PC-9 (cell line): ENCODE measurements at regions of chr5 and their contacts with region 1.

Region 1: GRCh38 chr5:179697993-179698934 is 503 bp upstream of the CANX start:
- DNase-seq: peak; percentile 96 to 100
- H3K4me3 ChIP-seq: peak overlapping the region; percentile 89
- H3K27ac ChIP-seq: peak overlapping the region; percentile 91
- H3K4me1 ChIP-seq: peaks cover 25% of the 10 kb centered on the region
- H3K27me3 ChIP-seq: no peaks in the 10 kb centered on the region
- CTCF ChIP-seq: no peak

Region 2: DNA sequence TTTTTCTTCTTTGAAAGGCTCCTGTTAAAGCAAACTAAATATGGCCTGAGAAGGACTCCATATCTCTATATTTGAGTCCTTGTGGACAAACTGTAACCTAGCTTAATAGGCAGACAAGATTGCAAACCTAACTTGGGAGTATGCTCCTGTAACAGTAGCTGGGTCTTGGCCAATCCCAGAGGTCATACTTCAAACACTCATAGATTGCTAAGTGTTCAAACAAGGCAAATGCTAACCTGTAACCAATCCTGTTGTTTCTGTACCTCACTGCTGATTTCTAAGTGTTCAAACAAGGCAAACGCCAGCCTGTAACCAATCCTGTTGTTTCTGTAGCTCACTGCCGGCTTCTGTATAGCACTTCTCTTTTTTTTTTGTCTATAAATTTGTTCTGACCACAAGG is 1020.8 kb before region 1 on chr5:
- CTCF ChIA-PET with region 1: interaction called, 25 read pairs
- POLR2A ChIA-PET with region 1: no interaction called
- intact Hi-C with region 1: no loop called
- DNase-seq: no peak
- H3K4me3 ChIP-seq: no peak overlapping the region
- H3K27ac ChIP-seq: no peak overlapping the region
- H3K4me1 ChIP-seq: no peaks in the 10 kb centered on the region
- H3K27me3 ChIP-seq: peaks cover 7% of the 10 kb centered on the region; the same call in 1 of the 2 replicates
- CTCF ChIP-seq: no peak

Region 3: GRCh38 chr5:179550511-179551230 is 147.6 kb before region 1 on chr5 and contains the start of gene RUFY1:
- CTCF ChIA-PET with region 1: no interaction called
- POLR2A ChIA-PET with region 1: no interaction called
- intact Hi-C with region 1: loop called (anchors 1 kb)
- DNase-seq: peak; percentile 58 to 91
- H3K4me3 ChIP-seq: peak within 1 kb of the TSS; percentile 100
- H3K27ac ChIP-seq: peak within 1 kb of the TSS; percentile 75
- H3K4me1 ChIP-seq: peaks cover 33% of the 10 kb centered on the region
- H3K27me3 ChIP-seq: no peaks in the 10 kb centered on the region
- CTCF ChIP-seq: no peak
- total RNA-seq, gene RUFY1: 63.9 and 72.2 TPM in 2 replicates

Region 4: GRCh38 chr5:179559284-179560252 is 138.7 kb before region 1 on chr5:
- CTCF ChIA-PET with region 1: no interaction called
- POLR2A ChIA-PET with region 1: no interaction called
- intact Hi-C with region 1: loop called (anchors 2 kb)
- DNase-seq: peak; percentile 96 to 98
- H3K4me3 ChIP-seq: peak overlapping the region; percentile 91
- H3K27ac ChIP-seq: peak overlapping the region; percentile 78
- H3K4me1 ChIP-seq: peaks cover 9% of the 10 kb centered on the region; the same call in 1 of the 2 replicates
- H3K27me3 ChIP-seq: no peaks in the 10 kb centered on the region
- CTCF ChIP-seq: no peak

Region 5: GRCh38 chr5:179623003-179623880 is 75.0 kb before region 1 on chr5 and contains the start of gene HNRNPH1:
- CTCF ChIA-PET with region 1: no interaction called
- POLR2A ChIA-PET with region 1: interaction called, 10 read pairs
- intact Hi-C with region 1: loop called (anchors 1 kb)
- DNase-seq: peak; percentile 93 to 99
- H3K4me3 ChIP-seq: peak within 1 kb of the TSS; percentile 95
- H3K27ac ChIP-seq: peak within 1 kb of the TSS; percentile 94
- H3K4me1 ChIP-seq: peaks cover 36% of the 10 kb centered on the region
- H3K27me3 ChIP-seq: no peaks in the 10 kb centered on the region
- CTCF ChIP-seq: 0 out of 2 replicates have a peak, but pooled peaks have one; percentile 28
- total RNA-seq, gene HNRNPH1: 626 and 723 TPM in 2 replicates

Region 6: GRCh38 chr5:179678223-179679013 is 19.8 kb before region 1 on chr5:
- CTCF ChIA-PET with region 1: no interaction called
- POLR2A ChIA-PET with region 1: interaction called, 10 read pairs
- intact Hi-C with region 1: loop called (anchors 1 kb)
- DNase-seq: peak; percentile 80 to 94
- H3K4me3 ChIP-seq: peak overlapping the region; percentile 69
- H3K27ac ChIP-seq: peak overlapping the region; percentile 18; the same call in 1 of the 2 replicates
- H3K4me1 ChIP-seq: peaks cover 31% of the 10 kb centered on the region
- H3K27me3 ChIP-seq: no peaks in the 10 kb centered on the region
- CTCF ChIP-seq: no peak